ENCODE measurements at regions of chr6 and their contacts with region 1.

Region 1: GRCh38 chr6:119442776-119443184 is 93.2 kb upstream of the MAN1A1 start:
- DNase-seq: no peak
- ATAC-seq: peak; percentile 7; the same call in 1 of the 3 replicates
- H3K4me3 ChIP-seq: no peak overlapping the region
- H3K27ac ChIP-seq: peak overlapping the region; percentile 42
- H3K4me1 ChIP-seq: peaks cover 44% of the 10 kb centered on the region
- H3K27me3 ChIP-seq: no peaks in the 10 kb centered on the region
- CTCF ChIP-seq: no peak
- EP300 ChIP-seq: peak in 1 of 2 experiments; percentile 52; a peak in 2 of 4 replicates
- POLR2A ChIP-seq: no peak
- RAD21 ChIP-seq: no peak

Region 2: DNA sequence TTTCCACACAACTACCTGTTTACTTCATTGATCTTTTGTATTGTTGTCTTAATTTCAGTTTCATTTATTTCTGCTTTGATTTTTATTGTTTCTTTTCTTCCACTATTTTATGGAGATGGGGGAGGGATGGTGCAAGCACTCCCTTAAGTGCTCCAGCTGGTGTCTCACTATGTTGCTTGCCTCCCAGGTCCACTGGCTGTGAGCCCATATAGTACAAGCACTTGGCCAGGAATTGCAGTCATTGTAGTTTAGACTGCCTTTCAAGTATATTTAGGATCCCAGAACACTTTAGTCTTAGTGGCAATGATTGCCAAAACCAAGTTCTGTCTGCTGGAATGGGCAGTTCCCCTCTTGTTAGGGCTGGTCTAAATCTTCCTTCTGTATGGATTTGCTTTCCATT is 58.3 kb before region 1 on chr6:
- CTCF ChIA-PET with region 1: no interaction called
- POLR2A ChIA-PET with region 1: no interaction called
- RAD21 ChIA-PET with region 1: no interaction called
- SMC1A ChIA-PET with region 1: no interaction called
- in situ Hi-C with region 1: no loop called
- intact Hi-C with region 1: no loop called
- DNase-seq: no peak
- ATAC-seq: no peak
- H3K4me3 ChIP-seq: no peak overlapping the region
- H3K27ac ChIP-seq: no peak overlapping the region
- H3K4me1 ChIP-seq: no peaks in the 10 kb centered on the region
- H3K27me3 ChIP-seq: no peaks in the 10 kb centered on the region
- CTCF ChIP-seq: no peak
- EP300 ChIP-seq: no peak
- POLR2A ChIP-seq: no peak
- RAD21 ChIP-seq: no peak

Region 3: DNA sequence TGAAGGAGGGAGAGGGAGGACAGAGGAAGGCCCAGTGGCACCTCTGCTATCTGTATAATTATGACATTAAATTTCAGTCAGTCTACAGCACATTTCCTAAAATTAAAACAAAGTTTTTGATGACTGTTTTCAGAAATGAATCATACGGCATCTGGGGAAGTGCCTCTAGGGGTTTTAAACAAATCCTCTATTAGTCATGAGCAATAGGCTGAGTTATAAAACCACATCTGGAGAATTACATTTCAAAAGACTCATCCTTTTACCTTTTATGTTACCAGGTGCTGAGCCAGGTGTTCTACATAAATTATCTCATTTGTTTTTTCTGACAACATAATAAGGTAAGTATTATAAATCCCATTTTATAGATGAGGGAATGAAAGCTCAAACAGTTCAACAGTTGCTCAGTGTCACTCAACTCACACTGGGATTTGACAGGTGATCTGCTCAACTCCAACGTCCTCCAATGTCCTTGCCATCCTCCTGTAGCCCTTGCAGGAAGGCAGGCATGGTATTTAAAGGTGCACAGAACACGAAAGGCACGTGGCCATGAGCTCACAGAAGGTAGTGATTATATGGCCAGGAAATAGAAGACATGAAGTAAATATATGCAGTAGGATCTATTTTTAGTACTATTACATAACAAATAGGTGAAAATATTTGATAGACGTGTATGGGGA is 91.0 kb after region 1 on chr6:
- CTCF ChIA-PET with region 1: no interaction called
- POLR2A ChIA-PET with region 1: no interaction called
- RAD21 ChIA-PET with region 1: no interaction called
- SMC1A ChIA-PET with region 1: no interaction called
- in situ Hi-C with region 1: no loop called
- intact Hi-C with region 1: loop called (anchors 10 kb)
- DNase-seq: peak; percentile 21
- ATAC-seq: peak; percentile 86
- H3K4me3 ChIP-seq: no peak overlapping the region
- H3K27ac ChIP-seq: 0 out of 2 replicates have a peak overlapping the region, but pooled peaks have one; percentile 15
- H3K4me1 ChIP-seq: peaks cover 13% of the 10 kb centered on the region
- H3K27me3 ChIP-seq: no peaks in the 10 kb centered on the region
- CTCF ChIP-seq: no peak
- EP300 ChIP-seq: peak; percentile 27 to 37; a peak in 1 of 4 replicates
- POLR2A ChIP-seq: no peak
- RAD21 ChIP-seq: no peak

Region 4: GRCh38 chr6:119562168-119562567 is 119.4 kb after region 1 on chr6:
- CTCF ChIA-PET with region 1: no interaction called
- POLR2A ChIA-PET with region 1: no interaction called
- RAD21 ChIA-PET with region 1: no interaction called
- SMC1A ChIA-PET with region 1: no interaction called
- in situ Hi-C with region 1: no loop called
- intact Hi-C with region 1: no loop called
- DNase-seq: no peak
- ATAC-seq: no peak
- H3K4me3 ChIP-seq: no peak overlapping the region
- H3K27ac ChIP-seq: no peak overlapping the region
- H3K4me1 ChIP-seq: no peaks in the 10 kb centered on the region
- H3K27me3 ChIP-seq: no peaks in the 10 kb centered on the region
- CTCF ChIP-seq: no peak
- EP300 ChIP-seq: no peak
- POLR2A ChIP-seq: no peak
- RAD21 ChIP-seq: no peak